ENCODE measurements at regions of chr2 and their contacts with region 1.

Region 1: GRCh38 chr2:73085691-73086360 is 14.3 kb upstream of the SFXN5 start:
- DNase-seq: peak; percentile 47
- ATAC-seq: peak; percentile 92
- H3K4me3 ChIP-seq: no peak overlapping the region
- H3K27ac ChIP-seq: no peak overlapping the region
- H3K4me1 ChIP-seq: no peaks in the 10 kb centered on the region
- H3K27me3 ChIP-seq: no peaks in the 10 kb centered on the region
- CTCF ChIP-seq: peak; percentile 96

Region 2: DNA sequence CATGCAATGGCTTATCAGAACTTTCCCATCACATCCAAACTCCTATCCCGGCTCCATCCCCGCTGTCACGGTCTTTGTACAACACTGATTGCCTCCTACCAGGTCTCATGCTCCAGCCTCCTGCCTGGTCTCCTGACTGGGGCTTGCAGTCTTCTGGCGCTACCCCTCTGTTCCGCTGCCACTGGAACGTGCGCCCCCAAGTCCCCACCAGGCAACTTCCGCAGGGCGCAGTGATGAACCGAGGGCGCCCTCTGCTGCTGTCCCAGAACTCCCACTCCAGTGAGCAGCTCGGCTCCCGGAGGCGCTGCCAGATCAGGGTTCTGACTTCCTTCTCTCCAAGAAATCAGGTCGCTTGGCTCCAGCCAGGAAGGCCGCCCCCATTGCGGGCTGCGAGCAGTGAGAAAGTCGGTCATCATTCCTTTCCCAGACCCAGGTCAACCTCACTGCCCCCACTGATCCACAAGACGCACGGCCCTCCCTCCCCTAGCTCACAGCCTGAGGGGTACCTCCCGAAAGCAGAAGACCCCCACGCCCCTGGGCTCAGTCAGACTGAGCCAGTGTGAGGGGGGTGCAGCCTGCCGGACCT is 70.8 kb after region 1 on chr2:
- CTCF ChIA-PET with region 1: interaction called, 9 read pairs
- POLR2A ChIA-PET with region 1: no interaction called
- in situ Hi-C with region 1: no loop called
- intact Hi-C with region 1: loop called (anchors 1 kb)
- DNase-seq: no peak
- ATAC-seq: peak; percentile 95
- H3K4me3 ChIP-seq: no peak overlapping the region
- H3K27ac ChIP-seq: no peak overlapping the region
- H3K4me1 ChIP-seq: no peaks in the 10 kb centered on the region
- H3K27me3 ChIP-seq: no peaks in the 10 kb centered on the region; the same call in 1 of the 2 replicates
- CTCF ChIP-seq: peak; percentile 86

Region 3: GRCh38 chr2:73324126-73324725 is 238.4 kb after region 1 on chr2:
- CTCF ChIA-PET with region 1: no interaction called
- POLR2A ChIA-PET with region 1: no interaction called
- in situ Hi-C with region 1: no loop called
- intact Hi-C with region 1: no loop called
- DNase-seq: no peak
- ATAC-seq: no peak
- H3K4me3 ChIP-seq: no peak overlapping the region
- H3K27ac ChIP-seq: no peak overlapping the region
- H3K4me1 ChIP-seq: no peaks in the 10 kb centered on the region
- H3K27me3 ChIP-seq: peaks cover 38% of the 10 kb centered on the region
- CTCF ChIP-seq: no peak

Measured in Panc1 (cell line).